ENCODE measurements at regions of chr9 and their contacts with region 1.

Region 1: GRCh38 chr9:96217754-96218693 is 84.0 kb downstream of the HSD17B3 start:
- DNase-seq: peak; percentile 76
- ATAC-seq: peak; percentile 91 to 94

Region 2: DNA sequence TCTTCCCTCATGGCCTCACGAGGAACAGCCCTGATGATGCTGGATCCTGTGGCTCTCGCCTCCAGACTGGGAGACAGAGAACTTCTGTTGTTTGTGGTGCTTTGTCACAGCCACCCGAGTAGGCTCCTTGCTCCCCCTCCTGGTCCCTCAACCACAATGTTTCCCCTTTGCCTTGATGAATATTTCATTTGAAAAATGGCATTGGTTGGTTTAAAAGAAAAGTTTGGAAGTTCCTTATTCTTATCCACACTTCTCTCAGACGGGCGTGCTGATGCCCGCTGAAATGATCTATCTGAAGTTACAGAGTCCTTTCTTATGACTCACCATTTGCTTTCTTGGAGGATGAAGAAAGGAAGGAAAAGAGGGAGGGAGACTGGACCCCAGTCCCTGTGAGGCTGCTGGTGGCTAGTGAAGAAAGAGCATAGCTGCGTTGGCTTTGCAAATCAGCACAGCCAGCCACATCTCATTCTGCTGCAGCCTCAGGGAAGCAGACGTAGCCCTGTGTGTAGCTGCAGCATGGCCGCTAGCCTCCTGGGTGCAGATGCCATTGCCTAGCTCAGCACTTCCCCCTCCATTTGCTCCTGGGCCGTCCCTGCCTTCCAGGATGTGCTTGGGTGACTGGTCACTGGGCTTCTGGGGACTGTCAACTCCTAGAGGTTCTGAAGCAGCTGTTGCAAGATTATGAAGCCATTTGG is 156.6 kb before region 1 on chr9:
- intact Hi-C with region 1: loop called in 1 of 2 experiments (anchors 10 kb)
- DNase-seq: peak; percentile 59
- ATAC-seq: peak; percentile 80 to 85

Region 3: GRCh38 chr9:96344458-96345180 is 126.6 kb after region 1 on chr9:
- intact Hi-C with region 1: no loop called
- DNase-seq: peak; percentile 42
- ATAC-seq: peak; percentile 81 to 93

Measured in left cardiac atrium (tissue), 4 donors.